ENCODE measurements at regions of chr14 and their contacts with region 1.

Region 1: DNA sequence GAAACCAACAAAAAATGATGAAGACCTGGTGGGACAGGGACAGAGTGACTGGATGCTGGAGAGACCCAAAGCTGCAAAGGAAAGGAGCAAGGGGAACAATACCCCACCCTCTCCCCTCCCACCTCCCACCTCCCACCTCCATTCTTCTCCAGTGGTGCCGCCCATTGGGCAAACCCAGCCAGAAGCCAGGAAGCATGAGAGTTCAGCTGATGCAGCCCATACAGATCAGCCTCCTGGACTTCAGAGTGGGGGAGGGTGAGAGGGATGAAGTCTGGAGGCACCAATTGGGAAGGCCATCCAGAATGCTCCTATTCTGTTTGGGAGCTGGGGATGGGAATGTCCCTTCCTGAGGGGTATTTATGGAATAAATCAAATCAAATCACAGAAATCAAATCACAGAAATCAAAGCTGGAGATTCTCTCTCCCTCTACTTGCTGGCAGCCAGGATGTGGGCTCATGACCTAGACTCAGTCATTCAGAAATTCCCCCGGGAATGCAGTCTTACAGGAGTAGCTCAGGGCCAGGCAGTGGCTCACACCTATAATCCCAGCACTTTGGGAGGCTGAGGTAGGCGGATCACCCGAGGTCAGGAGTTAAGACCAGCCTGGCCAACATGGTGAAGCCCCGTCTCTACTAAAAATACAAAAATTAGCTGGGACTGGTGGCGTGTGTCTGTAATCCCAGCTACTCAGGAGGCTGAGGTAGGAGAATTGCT is 31.1 kb downstream of the IRF2BPL start:
- DNase-seq: no peak
- ATAC-seq: no peak
- H3K4me3 ChIP-seq: no peak overlapping the region
- H3K27ac ChIP-seq: no peak overlapping the region
- H3K4me1 ChIP-seq: peaks cover 21% of the 10 kb centered on the region
- H3K27me3 ChIP-seq: no peaks in the 10 kb centered on the region
- CTCF ChIP-seq: no peak

Region 2: GRCh38 chr14:76962303-76962660 is 35.1 kb before region 1 on chr14:
- intact Hi-C with region 1: loop called (anchors 2 to 5 kb)
- DNase-seq: no peak
- ATAC-seq: peak in 2 of 4 donors; percentile 10 to 22
- H3K4me3 ChIP-seq: peak overlapping the region; percentile 65
- H3K27ac ChIP-seq: peak overlapping the region; percentile 79
- H3K4me1 ChIP-seq: peaks cover 13% of the 10 kb centered on the region
- H3K27me3 ChIP-seq: no peaks in the 10 kb centered on the region
- CTCF ChIP-seq: no peak

Region 3: GRCh38 chr14:77326167-77326566 is 328.8 kb after region 1 on chr14:
- intact Hi-C with region 1: no loop called
- DNase-seq: no peak
- ATAC-seq: no peak
- H3K4me3 ChIP-seq: no peak overlapping the region
- H3K27ac ChIP-seq: no peak overlapping the region
- H3K4me1 ChIP-seq: peaks cover 7% of the 10 kb centered on the region
- H3K27me3 ChIP-seq: no peaks in the 10 kb centered on the region
- CTCF ChIP-seq: no peak

Measured in psoas muscle (tissue), 8 donors.